ENCODE measurements at regions of chr18 and their contacts with region 1.

Region 1: DNA sequence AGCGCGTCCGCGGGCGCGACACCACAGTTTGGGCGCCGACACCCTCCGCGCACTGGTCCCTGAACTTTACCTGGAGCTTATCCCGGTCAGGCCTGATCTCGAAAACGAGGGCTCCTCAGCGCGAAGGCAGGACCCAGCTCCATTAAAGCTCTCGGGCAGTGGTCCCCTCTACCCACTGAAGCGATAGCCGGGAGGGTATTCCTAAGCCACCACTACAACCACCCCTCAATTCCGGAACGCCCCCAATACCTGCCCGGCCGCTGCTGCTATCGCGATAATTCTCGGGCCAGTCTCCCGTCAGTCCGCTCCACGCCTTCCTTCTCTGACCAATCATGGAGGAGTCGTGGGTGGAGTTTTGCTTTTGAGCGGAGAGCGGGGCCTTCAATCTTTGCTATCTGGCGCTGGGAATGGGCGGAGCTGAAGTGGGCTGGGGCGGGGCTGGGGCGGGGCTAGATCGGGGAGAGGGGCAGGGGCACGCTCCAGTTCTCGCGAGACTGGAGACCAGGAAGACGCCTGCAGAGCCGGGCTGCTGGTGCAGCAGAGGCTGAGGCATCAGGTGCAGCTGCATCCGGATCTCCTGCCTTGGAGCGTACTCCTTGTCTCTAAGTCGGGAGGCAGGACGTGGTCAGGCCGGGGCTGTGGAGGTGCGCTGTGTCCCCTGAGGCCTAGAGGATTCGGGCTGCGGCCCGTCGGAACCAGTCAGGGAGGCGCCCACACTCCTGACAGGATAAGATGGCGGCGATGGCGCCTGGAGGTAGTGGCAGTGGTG is at the starts of genes PIGN and RELCH:
- DNase-seq: peak; percentile 99
- H3K4me3 ChIP-seq: peak within 1 kb of the TSS; percentile 73 to 98 (median 80)
- H3K27ac ChIP-seq: peak within 1 kb of the TSS; percentile 68
- H3K4me1 ChIP-seq: no peaks in the 10 kb centered on the region
- H3K27me3 ChIP-seq: no peaks in the 10 kb centered on the region
- CTCF ChIP-seq: no peak
- total RNA-seq, gene PIGN: 46.3 to 49.5 TPM
- total RNA-seq, gene RELCH: 24.6 to 36.5 TPM

Region 2: GRCh38 chr18:61955644-61956043 is 231.3 kb before region 1 on chr18:
- CTCF ChIA-PET with region 1: interaction called, 11 read pairs
- dilution Hi-C with region 1: no loop called
- in situ Hi-C with region 1: no loop called
- intact Hi-C with region 1: no loop called
- DNase-seq: no peak
- H3K4me3 ChIP-seq: no peak overlapping the region
- H3K27ac ChIP-seq: no peak overlapping the region
- H3K4me1 ChIP-seq: peaks cover 30% of the 10 kb centered on the region
- H3K27me3 ChIP-seq: no peaks in the 10 kb centered on the region
- CTCF ChIP-seq: no peak

Region 3: DNA sequence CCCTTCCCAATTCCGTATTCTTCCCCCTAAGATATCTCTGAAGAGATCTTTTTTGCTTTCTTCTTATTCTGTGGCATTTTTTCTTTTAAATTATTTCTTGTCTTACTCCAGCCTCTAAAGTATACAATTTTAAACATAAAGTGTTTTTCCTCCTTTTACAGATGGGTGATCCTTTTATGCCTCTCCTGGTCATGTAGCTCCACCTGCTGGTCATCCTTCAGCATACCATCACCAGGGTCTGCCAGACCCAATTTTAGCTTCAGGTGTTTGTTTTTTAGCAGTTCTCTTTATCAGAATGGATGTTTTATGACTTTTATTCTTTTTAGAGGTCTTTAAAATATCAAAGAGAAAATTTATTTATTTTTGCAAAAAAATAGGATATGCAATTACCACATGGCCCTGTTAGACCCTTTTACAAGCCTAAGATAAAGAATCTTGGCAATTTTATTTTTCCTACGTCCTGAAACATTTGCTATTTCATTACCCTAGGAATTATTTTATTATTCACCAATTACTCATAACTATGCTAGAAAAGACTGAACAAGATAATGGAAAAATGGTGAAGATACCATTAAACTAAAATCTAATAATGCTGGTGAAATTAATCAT is 55.6 kb before region 1 on chr18:
- CTCF ChIA-PET with region 1: no interaction called
- dilution Hi-C with region 1: no loop called
- in situ Hi-C with region 1: no loop called
- intact Hi-C with region 1: no loop called
- DNase-seq: peak; percentile 29
- H3K4me3 ChIP-seq: no peak overlapping the region
- H3K27ac ChIP-seq: no peak overlapping the region
- H3K4me1 ChIP-seq: peaks cover 2% of the 10 kb centered on the region
- H3K27me3 ChIP-seq: no peaks in the 10 kb centered on the region
- CTCF ChIP-seq: peak; percentile 93 to 96

Region 4: DNA sequence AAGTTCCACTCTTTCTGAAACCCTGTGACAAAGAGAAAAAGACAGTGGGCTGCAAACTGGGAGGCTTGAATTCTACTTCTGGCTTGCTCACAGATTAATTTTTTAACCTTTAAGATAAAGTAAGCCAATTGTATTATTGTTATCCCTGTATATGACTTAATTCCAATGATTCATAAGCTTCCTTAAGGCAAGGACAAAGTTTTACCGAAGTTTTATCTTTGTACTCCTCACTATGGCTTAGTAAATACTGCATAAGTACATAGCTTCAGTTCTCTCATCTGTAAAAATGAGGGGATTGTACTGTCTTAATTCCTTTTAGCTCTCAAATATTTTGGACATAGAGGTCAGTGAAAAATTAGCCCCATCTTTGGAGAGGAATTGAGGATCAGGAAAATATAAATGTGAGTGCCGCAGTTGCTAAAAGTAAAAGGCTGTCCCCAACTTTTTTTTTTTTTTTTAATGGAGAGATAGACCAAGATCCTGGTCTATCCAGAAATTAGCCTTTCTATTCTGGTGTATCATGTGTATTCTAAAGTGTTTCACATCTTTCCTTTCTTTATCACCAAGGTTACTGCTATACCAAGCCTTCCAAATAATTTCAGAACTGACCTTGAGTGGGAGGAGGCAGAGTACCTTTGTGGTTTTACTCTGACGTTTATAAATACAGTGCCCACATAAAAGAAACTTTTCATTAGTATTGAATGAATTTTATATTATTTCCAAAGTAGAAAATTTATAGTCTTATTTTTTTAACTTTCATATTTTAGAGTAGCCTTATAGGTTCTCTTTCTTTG is 13.4 kb after region 1 on chr18:
- CTCF ChIA-PET with region 1: no interaction called
- dilution Hi-C with region 1: no loop called
- in situ Hi-C with region 1: no loop called
- intact Hi-C with region 1: loop called (anchors 2 kb)
- DNase-seq: peak; percentile 47
- H3K4me3 ChIP-seq: no peak overlapping the region
- H3K27ac ChIP-seq: no peak overlapping the region
- H3K4me1 ChIP-seq: peaks cover 6% of the 10 kb centered on the region
- H3K27me3 ChIP-seq: no peaks in the 10 kb centered on the region
- CTCF ChIP-seq: no peak

Region 5: DNA sequence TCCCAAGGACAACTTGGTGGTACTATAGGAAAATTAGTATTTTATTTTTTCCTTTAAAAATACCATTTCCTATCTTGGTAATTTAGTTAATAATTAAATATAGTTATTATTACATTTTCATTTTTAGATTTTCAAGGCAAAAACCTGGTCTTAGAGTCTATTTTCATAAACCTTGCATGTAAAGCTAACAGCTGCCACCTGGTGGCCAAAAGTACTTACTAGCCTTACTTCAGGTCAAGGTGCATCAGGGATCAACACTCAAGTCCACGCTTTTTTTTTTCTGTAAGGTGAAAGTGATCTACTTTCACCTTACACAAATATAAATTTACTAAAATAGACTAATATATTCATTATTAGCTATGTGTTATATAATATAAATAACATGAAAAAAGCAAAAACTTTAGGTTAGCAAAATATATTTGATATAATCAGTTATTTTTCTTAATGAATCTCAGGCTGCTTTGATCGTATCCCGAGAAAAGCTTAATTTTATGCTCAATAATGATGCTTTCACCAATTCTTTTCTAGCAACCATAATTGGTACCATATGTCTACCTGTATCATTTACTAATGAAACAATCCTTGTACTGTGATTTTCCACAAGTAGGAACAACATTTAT is 62.6 kb after region 1 on chr18:
- CTCF ChIA-PET with region 1: no interaction called
- dilution Hi-C with region 1: no loop called
- in situ Hi-C with region 1: loop called (anchors 5 kb)
- intact Hi-C with region 1: loop called (anchors 1 kb)
- DNase-seq: peak; percentile 57
- H3K4me3 ChIP-seq: no peak overlapping the region
- H3K27ac ChIP-seq: no peak overlapping the region
- H3K4me1 ChIP-seq: no peaks in the 10 kb centered on the region
- H3K27me3 ChIP-seq: no peaks in the 10 kb centered on the region
- CTCF ChIP-seq: peak; percentile 79 to 81

Region 6: DNA sequence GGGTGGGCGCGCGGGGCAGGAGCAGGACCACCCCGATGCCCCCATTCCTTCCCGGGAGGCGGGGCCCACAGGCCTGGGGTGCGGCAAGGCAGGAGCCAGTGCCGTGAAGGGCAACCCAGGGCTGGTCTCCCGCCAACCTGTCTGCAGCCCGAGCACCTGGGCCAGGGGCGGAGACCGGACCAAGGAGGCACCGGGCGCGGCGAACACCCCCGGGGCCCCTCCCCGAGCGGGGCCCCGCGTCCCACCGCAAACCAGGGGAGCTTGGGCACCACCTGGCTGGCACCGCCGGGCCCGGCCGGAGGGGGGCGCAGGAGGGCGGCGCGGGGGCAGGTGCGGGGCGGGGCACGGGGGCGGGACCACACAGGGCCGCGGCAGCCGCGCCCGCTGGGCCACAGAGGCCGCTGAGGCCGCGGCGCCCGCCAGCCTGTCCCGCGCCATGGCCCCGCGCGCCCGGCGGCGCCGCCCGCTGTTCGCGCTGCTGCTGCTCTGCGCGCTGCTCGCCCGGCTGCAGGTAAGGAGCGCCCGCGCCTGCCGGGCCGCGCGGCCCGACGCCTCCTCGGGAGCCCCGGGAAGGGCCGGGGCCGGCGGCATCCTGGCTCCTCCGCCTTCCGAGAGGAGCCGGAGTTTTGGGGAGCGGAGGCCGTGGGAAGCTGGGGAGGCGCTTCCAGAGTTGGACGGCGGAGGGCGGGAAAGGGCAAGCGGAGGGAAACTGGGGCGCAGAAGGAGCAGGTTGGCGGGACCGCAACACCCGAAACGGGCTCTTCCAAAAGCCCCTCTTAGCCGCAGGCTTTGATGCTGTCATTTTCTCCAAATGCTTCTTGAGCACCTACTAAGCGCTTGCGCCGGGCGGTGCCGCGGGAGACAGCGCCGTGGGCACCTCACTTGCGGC is 138.2 kb after region 1 on chr18 and contains the start of gene TNFRSF11A:
- CTCF ChIA-PET with region 1: no interaction called
- dilution Hi-C with region 1: no loop called
- in situ Hi-C with region 1: no loop called
- intact Hi-C with region 1: loop called (anchors 10 kb)
- DNase-seq: peak; percentile 58
- H3K4me3 ChIP-seq: peak within 1 kb of the TSS; percentile 54 to 71 (median 64)
- H3K27ac ChIP-seq: no peak within 1 kb of the TSS
- H3K4me1 ChIP-seq: peaks cover 14% of the 10 kb centered on the region
- H3K27me3 ChIP-seq: peaks cover 3% of the 10 kb centered on the region
- CTCF ChIP-seq: peak; percentile 7 to 47
- total RNA-seq, gene TNFRSF11A: 0.50 to 6.1 TPM

Measured in mammary epithelial cell (primary cell).